Spleen (tissue), 13 donors: ENCODE measurements at regions of chr12 and their contacts with region 1.

Region 1: DNA sequence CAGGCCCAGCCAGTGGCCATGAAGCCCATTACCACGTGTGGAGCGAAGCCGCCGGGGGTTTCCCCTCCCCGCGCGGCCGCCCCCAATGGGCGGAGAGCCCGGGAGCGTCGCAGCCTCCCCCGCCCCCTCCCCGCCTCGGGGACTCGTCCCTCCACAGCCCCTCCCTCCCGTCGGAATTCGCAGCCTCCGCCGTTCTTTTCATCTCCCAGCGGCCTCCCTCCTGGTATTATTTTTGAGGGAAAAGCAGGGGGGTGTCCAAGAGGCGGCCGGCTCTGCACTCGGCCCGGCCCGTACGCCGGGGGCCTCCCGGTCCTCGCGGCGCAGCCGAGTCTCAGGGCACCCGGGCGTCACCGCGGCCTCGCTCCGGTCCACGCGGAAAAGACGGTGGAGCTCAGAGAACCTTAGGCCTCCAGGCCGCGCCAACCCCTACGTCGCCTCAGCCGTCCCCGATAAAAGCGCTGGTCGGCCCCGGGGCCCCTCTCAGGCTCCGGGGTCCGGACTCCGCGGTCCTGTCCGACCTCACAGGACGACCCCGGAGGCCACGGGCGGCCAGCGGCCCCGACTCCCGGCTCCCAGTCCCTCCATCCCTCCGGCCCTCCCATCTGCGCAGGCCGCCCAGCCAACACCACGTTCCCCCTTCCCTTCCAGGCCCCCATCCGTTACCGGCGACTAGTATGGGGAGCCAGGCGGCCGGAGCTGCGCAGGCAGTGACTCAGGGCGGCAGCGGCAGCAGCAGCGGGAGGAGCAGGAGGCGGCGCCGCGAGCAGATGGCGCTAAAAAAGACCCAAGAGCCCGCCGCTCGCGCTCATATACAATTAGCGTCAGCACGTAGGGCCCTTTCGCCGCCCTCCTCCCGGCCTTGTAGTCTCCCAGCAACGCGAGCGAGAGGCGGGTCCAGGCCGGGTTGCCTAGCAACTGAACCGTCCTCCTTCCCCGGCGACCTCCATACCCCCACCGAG is at the start of gene NAP1L1:
- DNase-seq: peak; percentile 99
- H3K4me3 ChIP-seq: peak within 1 kb of the TSS; percentile 70 to 93 (median 87)
- H3K27ac ChIP-seq: peak within 1 kb of the TSS; percentile 94 to 99 (median 98)
- H3K4me1 ChIP-seq: peaks cover 14 to 69% (median 56%) of the 10 kb centered on the region in 6 donors
- H3K27me3 ChIP-seq: no peaks in the 10 kb centered on the region
- CTCF ChIP-seq: no peak
- POLR2A ChIP-seq: peak in 2 of 3 donors; percentile 79 to 96
- total RNA-seq, gene NAP1L1: 353 to 460 (median 404) TPM

Region 2: DNA sequence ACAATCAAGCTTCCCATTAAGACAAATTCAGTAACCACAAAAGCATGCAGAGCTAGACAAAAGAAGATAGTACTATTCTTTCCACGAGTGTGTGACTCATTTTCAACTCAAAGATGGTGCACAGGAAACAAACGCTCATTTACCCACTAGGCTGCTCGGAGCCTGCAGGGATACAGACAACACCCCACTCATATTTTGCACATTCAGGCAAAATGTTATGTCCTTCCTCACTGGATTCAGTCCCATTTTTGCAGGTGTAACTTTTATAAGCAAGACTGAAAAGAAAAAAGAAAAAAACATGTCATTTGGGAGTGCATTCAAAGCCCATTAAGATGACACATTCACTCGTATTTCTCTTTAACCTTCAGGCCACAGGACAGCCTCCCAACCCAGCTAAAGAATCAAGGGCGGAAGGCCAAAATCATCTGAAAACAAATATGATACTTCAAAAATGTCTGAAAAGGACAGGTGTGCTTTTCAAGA is 425.2 kb before region 1 on chr12:
- intact Hi-C with region 1: no loop called
- DNase-seq: no peak
- H3K4me3 ChIP-seq: no peak overlapping the region
- H3K27ac ChIP-seq: no peak overlapping the region
- H3K4me1 ChIP-seq: no peaks in the 10 kb centered on the region
- H3K27me3 ChIP-seq: no peaks in the 10 kb centered on the region
- CTCF ChIP-seq: no peak
- POLR2A ChIP-seq: no peak

Region 3: DNA sequence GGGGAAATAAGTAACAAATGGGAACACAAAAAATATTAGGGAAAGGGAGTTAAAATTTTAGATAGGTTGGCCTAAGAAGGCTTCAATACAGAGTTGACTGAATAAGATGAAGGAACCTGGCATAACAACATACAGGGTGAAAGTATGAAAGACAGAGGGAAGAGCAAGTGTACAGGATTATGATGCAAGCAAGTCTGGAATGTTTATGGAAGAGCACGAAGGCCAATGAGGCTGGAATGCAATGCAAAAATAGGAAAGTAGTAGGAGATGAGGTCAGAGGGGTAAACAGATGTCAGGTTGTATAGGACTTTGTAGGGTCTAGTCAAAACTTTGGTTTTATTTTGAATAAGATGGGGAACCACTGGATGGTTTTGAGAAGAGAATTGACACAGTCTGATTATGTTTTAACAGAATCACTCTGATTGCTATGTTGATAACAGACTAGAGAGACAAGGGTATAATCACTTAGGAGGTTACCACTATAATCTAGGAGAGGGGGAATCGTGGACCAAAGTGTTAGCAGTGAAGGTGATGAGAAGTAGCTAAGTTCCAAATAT is 378.6 kb after region 1 on chr12:
- intact Hi-C with region 1: no loop called
- DNase-seq: no peak
- H3K4me3 ChIP-seq: no peak overlapping the region
- H3K27ac ChIP-seq: no peak overlapping the region
- H3K4me1 ChIP-seq: peaks cover 0 to 52% (median 7%) of the 10 kb centered on the region in 6 donors
- H3K27me3 ChIP-seq: no peaks in the 10 kb centered on the region
- CTCF ChIP-seq: no peak
- POLR2A ChIP-seq: no peak

Region 4: DNA sequence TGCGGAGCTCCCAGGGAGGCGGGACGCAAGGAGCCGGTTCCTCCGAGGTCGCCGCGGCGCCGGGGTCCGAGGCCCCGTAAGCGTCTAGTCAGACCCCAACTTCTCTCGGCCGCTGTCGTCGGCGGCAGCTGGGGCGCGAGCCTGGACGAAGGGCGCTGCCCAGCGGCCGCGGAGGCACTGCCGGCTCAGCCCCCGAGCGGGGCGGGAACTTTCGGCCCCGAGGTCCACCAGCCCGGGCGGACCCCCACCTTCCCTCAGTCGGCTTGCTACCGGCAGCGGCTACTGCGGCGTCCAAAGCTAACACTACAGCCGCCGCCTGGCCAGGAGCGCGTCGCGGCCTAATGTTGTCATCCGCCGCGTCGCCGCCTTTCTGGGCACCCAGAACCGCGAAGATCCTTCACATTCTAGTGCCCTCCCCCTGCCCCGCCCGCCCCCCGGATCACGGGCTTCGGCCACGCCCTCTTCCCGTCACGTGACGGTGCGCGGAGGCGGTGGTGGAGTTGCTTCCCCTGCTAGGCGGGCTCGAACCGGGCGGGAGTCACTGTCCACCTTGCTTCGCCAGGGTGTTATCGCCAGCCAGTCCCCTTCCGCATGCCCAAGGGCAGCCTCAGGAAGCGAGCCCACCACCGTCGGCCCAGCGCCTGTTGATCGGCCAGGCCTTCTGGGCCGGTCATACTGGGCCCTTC is 475.4 kb after region 1 on chr12 and contains the start of gene OSBPL8:
- intact Hi-C with region 1: loop called (anchors 10 kb)
- DNase-seq: peak; percentile 100
- H3K4me3 ChIP-seq: peak within 1 kb of the TSS; percentile 80 to 96 (median 88)
- H3K27ac ChIP-seq: peak within 1 kb of the TSS; percentile 96 to 99 (median 97)
- H3K4me1 ChIP-seq: peaks cover 20 to 55% (median 47%) of the 10 kb centered on the region in 6 donors
- H3K27me3 ChIP-seq: no peaks in the 10 kb centered on the region
- CTCF ChIP-seq: peak in 9 of 11 experiments; percentile 15 to 58 (median 39)
- POLR2A ChIP-seq: peak in 2 of 3 donors; percentile 17 to 72
- total RNA-seq, gene OSBPL8: 90.8 to 127 (median 114) TPM